ENCODE measurements at regions of chr6 and their contacts with region 1.

Region 1: GRCh38 chr6:70166088-70166958 is 136.6 kb downstream of the COL9A1 start:
- DNase-seq: peak; percentile 83
- H3K4me3 ChIP-seq: peak overlapping the region; percentile 36
- H3K27ac ChIP-seq: no peak overlapping the region
- H3K4me1 ChIP-seq: peaks cover 34% of the 10 kb centered on the region
- H3K27me3 ChIP-seq: no peaks in the 10 kb centered on the region
- CTCF ChIP-seq: peak; percentile 84

Region 2: DNA sequence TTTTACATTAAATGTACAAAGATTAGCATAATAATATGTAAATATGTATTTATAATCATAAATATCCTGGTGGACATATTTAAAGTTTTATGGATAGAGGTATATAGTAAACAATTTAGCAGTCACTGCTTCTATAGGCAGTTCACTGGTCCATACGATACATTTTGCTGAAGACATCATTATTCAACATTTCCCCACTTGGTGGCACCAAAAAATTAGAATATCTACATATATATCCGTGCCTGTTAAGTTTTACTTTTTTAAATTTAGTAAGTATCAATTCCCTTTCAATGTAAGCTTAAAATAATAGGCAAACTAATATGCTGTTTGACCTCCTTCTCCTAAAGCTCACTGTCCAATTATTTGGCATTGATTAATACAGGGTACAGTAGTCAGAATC is 433.7 kb before region 1 on chr6:
- CTCF ChIA-PET with region 1: interaction called, 5 read pairs
- POLR2A ChIA-PET with region 1: no interaction called
- intact Hi-C with region 1: loop called (anchors 2 kb)
- DNase-seq: peak; percentile 45
- H3K4me3 ChIP-seq: no peak overlapping the region
- H3K27ac ChIP-seq: no peak overlapping the region
- H3K4me1 ChIP-seq: no peaks in the 10 kb centered on the region
- H3K27me3 ChIP-seq: no peaks in the 10 kb centered on the region
- CTCF ChIP-seq: peak; percentile 59

Region 3: GRCh38 chr6:69835414-69836179 is 330.7 kb before region 1 on chr6:
- CTCF ChIA-PET with region 1: interaction called, 3 read pairs
- POLR2A ChIA-PET with region 1: no interaction called
- intact Hi-C with region 1: loop called (anchors 5 kb)
- DNase-seq: peak; percentile 73
- H3K4me3 ChIP-seq: peak overlapping the region; percentile 14
- H3K27ac ChIP-seq: no peak overlapping the region
- H3K4me1 ChIP-seq: no peaks in the 10 kb centered on the region
- H3K27me3 ChIP-seq: no peaks in the 10 kb centered on the region
- CTCF ChIP-seq: peak; percentile 85

Region 4: GRCh38 chr6:69957985-69958559 is 208.3 kb before region 1 on chr6:
- CTCF ChIA-PET with region 1: no interaction called
- POLR2A ChIA-PET with region 1: no interaction called
- intact Hi-C with region 1: no loop called
- DNase-seq: no peak
- H3K4me3 ChIP-seq: no peak overlapping the region
- H3K27ac ChIP-seq: no peak overlapping the region
- H3K4me1 ChIP-seq: no peaks in the 10 kb centered on the region
- H3K27me3 ChIP-seq: no peaks in the 10 kb centered on the region
- CTCF ChIP-seq: no peak

Region 5: DNA sequence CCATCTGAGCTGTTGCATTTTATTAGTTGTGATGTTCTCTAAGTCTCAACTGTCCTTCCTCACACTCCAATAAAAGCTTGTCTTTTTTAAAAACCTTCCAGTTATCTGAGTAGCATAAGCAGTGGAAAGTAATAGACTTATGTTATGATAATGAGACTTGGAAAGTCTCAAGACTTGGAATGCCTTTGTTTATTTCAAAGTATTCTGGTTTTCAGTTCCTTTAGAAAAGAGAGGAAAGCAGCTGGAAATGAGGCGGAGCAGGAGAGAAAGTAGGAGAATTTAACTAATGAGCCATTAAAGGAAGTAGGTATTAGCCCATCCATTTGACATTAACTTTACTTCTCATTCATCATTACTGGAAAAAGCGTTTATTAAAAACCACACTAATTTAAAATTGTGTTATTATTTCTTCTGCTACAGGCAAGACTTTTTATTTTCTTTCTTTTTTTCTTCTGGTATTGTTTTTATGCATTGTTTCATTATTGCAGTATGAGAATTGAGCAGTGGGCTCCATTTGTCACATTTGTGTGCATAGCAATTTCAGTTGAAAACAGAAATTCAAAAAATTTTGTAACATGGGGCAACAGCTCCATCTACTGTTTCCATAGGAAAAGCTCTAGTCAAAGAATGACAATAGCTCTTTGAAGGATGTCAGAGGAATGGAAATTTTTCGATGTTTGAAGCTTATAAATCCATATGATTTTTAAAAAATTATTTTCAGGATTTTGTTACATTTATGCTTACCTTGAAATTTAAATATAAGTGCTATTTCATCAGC is 58.3 kb before region 1 on chr6:
- CTCF ChIA-PET with region 1: no interaction called
- POLR2A ChIA-PET with region 1: no interaction called
- intact Hi-C with region 1: loop called (anchors 2 kb)
- DNase-seq: peak; percentile 72
- H3K4me3 ChIP-seq: no peak overlapping the region
- H3K27ac ChIP-seq: no peak overlapping the region
- H3K4me1 ChIP-seq: peaks cover 9% of the 10 kb centered on the region
- H3K27me3 ChIP-seq: no peaks in the 10 kb centered on the region
- CTCF ChIP-seq: peak; percentile 81

Measured in A673 (cell line).